ENCODE measurements at regions of chr1 and their contacts with region 1.

Region 1: DNA sequence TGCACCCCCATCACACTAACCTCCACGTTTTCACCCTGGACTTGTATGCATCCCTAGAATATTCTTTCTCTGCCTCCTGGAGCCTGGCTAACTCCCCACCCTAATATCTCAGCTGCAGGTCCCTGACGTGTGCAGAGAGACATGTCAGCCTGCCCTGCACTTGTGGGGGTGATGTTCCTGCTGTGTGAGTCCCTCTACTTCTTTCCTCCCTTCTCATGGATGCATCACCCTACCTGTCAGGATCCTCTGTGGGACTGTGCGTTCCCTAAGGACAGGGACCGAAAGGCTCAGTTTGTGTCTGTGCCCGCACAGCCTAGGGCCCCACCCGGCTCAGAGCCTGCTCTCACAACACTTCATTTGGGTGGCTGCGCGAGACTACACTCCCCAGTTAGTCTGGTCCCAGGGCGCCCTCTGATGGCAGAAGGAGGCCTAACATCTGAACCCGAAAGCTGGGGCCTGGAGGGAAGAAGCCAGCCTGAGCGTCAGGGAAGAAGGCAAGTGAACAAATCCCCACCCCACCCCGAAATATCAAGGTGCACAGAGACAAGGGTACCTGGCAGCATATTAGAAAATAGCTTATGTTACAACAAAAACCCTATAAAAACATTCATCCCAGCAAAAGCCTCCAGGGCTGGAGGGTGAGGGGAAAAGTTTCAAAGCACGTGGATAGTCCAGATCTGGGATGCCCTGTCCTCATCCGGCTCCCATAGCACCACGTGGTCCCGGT is 3.7 kb downstream of the CD52 start:
- DNase-seq: peak; percentile 87
- H3K4me3 Mint-ChIP-seq: peak overlapping the region; percentile 83
- H3K27ac Mint-ChIP-seq: peak overlapping the region; percentile 95
- H3K4me1 Mint-ChIP-seq: peaks cover 35% of the 10 kb centered on the region
- H3K27me3 Mint-ChIP-seq: no peaks in the 10 kb centered on the region

Region 2: GRCh38 chr1:26169669-26170471 is 151.6 kb before region 1 on chr1 and contains the start of gene ZNF593:
- intact Hi-C with region 1: loop called (anchors 2 kb)
- DNase-seq: peak; percentile 87
- H3K4me3 Mint-ChIP-seq: peak within 1 kb of the TSS; percentile 92
- H3K27ac Mint-ChIP-seq: peak within 1 kb of the TSS; percentile 88
- H3K4me1 Mint-ChIP-seq: peaks cover 25% of the 10 kb centered on the region
- H3K27me3 Mint-ChIP-seq: peaks cover 8% of the 10 kb centered on the region
- total RNA-seq, gene ZNF593: 57.5 and 65.0 TPM in 2 replicates

Region 3: DNA sequence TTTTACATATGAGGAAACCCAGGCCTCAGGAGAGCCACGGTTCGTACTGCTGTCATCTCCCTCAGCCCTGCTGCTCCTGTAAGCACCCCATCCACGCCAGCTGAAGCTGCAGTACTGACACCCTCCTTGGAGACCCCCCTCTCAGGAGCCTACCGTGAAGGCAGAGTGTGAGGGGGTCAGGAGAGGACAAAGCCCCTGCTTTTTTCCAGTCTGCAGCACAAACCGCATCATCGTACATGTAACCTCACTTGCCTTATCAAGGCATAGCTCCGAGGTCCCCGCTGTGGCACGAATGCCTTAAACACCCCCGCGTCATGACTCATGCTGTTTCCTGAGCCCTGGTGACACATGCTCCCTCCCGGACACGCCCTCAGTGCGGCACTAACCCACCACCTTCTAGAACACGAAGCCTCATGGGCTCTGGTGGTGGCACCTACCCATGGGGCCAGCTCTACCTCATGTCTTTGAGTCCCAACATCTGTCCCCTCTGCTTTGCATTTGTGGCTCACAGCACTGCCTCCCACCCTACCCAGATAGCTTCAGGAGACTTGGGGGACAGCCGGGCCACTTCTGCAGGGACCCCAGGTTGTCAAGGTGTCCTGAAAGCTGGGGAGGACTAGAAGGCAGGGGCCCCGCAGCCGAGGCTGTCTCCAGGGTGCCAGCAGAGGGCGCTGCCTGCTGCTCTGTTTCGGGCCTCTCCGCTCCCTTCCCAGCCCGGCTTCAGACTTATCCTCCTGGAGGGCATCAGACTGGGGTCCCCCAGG is 36.7 kb before region 1 on chr1:
- intact Hi-C with region 1: loop called (anchors 1 kb)
- DNase-seq: peak; percentile 91
- H3K4me3 Mint-ChIP-seq: peak overlapping the region; percentile 77
- H3K27ac Mint-ChIP-seq: peak overlapping the region; percentile 100
- H3K4me1 Mint-ChIP-seq: peaks cover 82% of the 10 kb centered on the region
- H3K27me3 Mint-ChIP-seq: no peaks in the 10 kb centered on the region

Region 4: DNA sequence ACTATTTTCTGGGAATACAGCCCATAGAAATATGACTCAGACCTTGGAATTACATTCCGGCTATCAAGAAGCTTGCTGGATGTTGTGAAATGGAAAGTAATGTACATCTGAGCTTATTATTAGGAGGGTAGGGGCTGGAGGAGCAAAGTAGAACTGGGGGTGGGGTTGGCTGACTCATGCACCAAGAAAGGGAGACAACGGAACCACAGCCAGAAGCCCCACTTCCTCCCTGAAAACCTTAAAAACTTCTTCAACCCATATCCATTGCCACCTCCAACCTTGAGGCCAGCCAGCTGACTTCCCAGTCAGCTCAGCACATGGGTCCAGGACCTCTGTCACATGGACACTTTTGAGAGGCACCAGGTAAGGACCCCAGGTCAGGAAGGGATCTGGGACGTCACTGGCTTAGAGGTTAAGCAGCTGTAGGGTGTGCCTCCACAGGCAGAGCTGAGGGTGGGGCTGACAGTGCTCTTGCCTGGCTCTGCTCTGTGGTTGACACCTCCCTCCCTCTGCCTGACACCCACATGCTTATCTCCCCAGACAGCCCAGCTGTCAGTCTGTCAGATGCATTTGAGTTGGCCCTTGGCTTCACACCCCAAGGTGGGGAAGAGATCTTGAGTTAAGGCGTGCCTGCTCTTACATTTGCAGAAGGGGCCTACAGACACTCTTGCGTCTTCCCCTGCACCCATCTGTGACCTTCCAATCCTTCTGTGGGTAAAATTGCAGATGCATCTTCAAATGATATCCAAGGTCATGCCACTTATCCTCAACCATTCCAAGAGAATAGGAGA is 56.8 kb after region 1 on chr1:
- intact Hi-C with region 1: loop called (anchors 5 kb)
- DNase-seq: peak; percentile 82
- H3K4me3 Mint-ChIP-seq: peak overlapping the region; percentile 44
- H3K27ac Mint-ChIP-seq: peak overlapping the region; percentile 75
- H3K4me1 Mint-ChIP-seq: peaks cover 58% of the 10 kb centered on the region
- H3K27me3 Mint-ChIP-seq: no peaks in the 10 kb centered on the region

Region 5: GRCh38 chr1:26582836-26583460 is 261.5 kb after region 1 on chr1:
- intact Hi-C with region 1: loop called (anchors 10 kb)
- DNase-seq: peak; percentile 22
- H3K4me3 Mint-ChIP-seq: peak overlapping the region; percentile 31
- H3K27ac Mint-ChIP-seq: peak overlapping the region; percentile 94
- H3K4me1 Mint-ChIP-seq: peaks cover 45% of the 10 kb centered on the region
- H3K27me3 Mint-ChIP-seq: no peaks in the 10 kb centered on the region